Activated B cell treated with CpG ODN at 0.5 μM for 24 hours (primary cell): ENCODE measurements at regions of chr17 and their contacts with region 1.

Region 1: GRCh38 chr17:45385331-45385997 is 47.2 kb downstream of the ARHGAP27 start:
- DNase-seq: peak; percentile 84
- ATAC-seq: peak; percentile 94
- H3K4me3 Mint-ChIP-seq: no peak overlapping the region
- H3K27ac Mint-ChIP-seq: no peak overlapping the region
- H3K4me1 Mint-ChIP-seq: peaks cover 7% of the 10 kb centered on the region
- H3K27me3 Mint-ChIP-seq: peaks cover 8% of the 10 kb centered on the region
- CTCF ChIP-seq: peak; percentile 35

Region 2: GRCh38 chr17:45235416-45236281 is 149.8 kb before region 1 on chr17:
- CTCF ChIA-PET with region 1: interaction called, 19 read pairs
- POLR2A ChIA-PET with region 1: no interaction called
- intact Hi-C with region 1: loop called (anchors 1 kb)
- DNase-seq: peak; percentile 64
- ATAC-seq: peak; percentile 67
- H3K4me3 Mint-ChIP-seq: no peak overlapping the region
- H3K27ac Mint-ChIP-seq: peak overlapping the region; percentile 15
- H3K4me1 Mint-ChIP-seq: peaks cover 50% of the 10 kb centered on the region
- H3K27me3 Mint-ChIP-seq: no peaks in the 10 kb centered on the region
- CTCF ChIP-seq: peak; percentile 70

Region 3: DNA sequence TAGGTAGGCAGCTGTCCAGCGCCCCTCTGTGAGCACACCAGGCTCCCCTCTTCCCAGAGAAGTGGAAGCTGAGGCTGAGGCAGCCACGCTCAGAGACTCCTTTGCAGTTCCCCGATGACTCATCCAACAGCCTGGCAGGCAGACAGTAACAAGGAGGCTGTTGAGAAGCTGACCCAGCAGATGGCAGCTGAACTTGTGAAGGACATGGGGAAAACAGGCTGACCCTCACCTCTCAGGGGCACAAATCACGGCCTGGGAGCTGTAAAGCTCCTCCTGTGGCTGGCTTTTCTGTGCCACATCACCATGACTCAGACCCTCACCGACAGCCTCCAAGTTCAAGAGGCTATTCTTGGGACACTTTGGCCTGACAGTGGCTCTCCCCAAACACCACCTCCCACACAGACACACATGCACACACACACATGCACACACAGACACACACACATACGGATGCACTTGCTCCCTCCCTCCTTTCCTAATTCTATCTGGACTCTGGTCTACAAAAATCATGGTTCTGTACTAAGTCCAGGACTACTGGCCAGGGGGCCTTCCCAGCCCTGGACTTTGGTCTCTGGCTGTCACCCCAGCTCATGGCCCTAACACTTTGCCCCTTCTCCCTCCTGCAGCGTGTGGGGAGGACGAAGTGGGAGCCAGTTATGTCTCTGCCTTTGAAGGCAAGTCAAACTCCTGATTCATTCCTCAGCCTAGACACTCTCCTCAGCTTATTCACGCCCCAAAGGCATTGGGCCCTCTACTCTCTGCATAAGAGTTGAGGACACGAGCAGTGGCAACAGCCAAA is 91.9 kb before region 1 on chr17:
- CTCF ChIA-PET with region 1: interaction called, 14 read pairs
- POLR2A ChIA-PET with region 1: interaction called, 6 read pairs
- intact Hi-C with region 1: no loop called
- DNase-seq: no peak
- ATAC-seq: peak; percentile 35
- H3K4me3 Mint-ChIP-seq: peak overlapping the region; percentile 28
- H3K27ac Mint-ChIP-seq: peak overlapping the region; percentile 73
- H3K4me1 Mint-ChIP-seq: peaks cover 87% of the 10 kb centered on the region
- H3K27me3 Mint-ChIP-seq: no peaks in the 10 kb centered on the region
- CTCF ChIP-seq: no peak

Region 4: DNA sequence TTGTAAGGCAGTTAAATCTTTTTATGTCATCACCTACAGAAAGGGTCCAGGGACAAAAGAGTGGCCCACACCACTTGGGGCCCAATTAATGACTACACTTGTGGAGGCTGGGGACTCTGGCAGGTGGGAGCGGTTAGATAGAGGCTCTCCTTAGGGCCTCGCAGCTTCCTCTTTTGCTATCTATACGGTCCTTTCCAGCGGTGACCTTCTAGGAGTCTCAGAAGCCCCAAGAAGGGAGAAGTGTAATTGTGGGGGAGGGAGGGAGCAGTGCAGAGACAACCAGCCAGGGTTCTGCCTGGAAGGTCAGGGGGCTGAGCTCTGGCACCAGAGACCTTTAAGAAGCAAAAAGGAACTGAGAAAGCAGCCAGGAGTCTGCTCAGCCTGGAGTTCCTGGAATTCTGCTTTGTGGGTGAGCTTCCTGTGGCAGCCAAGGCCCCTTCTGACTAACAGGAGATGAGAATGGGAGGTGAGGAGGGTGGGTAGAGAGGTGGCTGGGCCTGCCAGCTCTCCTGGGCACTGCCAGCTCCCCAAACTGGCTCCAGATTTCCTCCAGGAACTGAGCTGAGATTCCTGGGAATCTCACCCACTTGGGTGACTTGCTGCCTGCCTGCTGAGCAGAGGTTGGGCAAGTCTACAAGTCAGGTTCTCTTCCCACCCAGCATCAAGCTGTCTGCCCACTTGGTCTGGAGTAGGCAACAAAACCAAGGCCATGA is 52.3 kb before region 1 on chr17:
- CTCF ChIA-PET with region 1: interaction called, 6 read pairs
- POLR2A ChIA-PET with region 1: no interaction called
- intact Hi-C with region 1: loop called (anchors 5 kb)
- DNase-seq: no peak
- ATAC-seq: peak; percentile 77
- H3K4me3 Mint-ChIP-seq: peak overlapping the region; percentile 46
- H3K27ac Mint-ChIP-seq: peak overlapping the region; percentile 69
- H3K4me1 Mint-ChIP-seq: peaks cover 43% of the 10 kb centered on the region
- H3K27me3 Mint-ChIP-seq: no peaks in the 10 kb centered on the region
- CTCF ChIP-seq: no peak

Region 5: GRCh38 chr17:45371414-45372327 is 13.8 kb before region 1 on chr17:
- CTCF ChIA-PET with region 1: interaction called, 8 read pairs
- POLR2A ChIA-PET with region 1: no interaction called
- intact Hi-C with region 1: loop called (anchors 1 kb)
- DNase-seq: peak; percentile 31
- ATAC-seq: peak; percentile 45
- H3K4me3 Mint-ChIP-seq: peak overlapping the region; percentile 49
- H3K27ac Mint-ChIP-seq: no peak overlapping the region
- H3K4me1 Mint-ChIP-seq: peaks cover 18% of the 10 kb centered on the region
- H3K27me3 Mint-ChIP-seq: peaks cover 12% of the 10 kb centered on the region
- CTCF ChIP-seq: no peak